ENCODE measurements at regions of chr1 and their contacts with region 1.

Region 1: GRCh38 chr1:32933742-32934322 is 30.8 kb downstream of the RNF19B start:
- DNase-seq: peak; percentile 99
- ATAC-seq: peak; percentile 87
- H3K4me3 ChIP-seq: peak overlapping the region; percentile 42 to 48 (median 44); a peak in 5 of 6 replicates
- H3K27ac ChIP-seq: peak overlapping the region; percentile 90
- H3K4me1 ChIP-seq: peaks cover 45% of the 10 kb centered on the region
- H3K27me3 ChIP-seq: peaks cover 0 to 10% of the 10 kb centered on the region in 2 experiments; a peak in 3 of 5 replicates
- CTCF ChIP-seq: peak; percentile 21
- EP300 ChIP-seq: peak in 1 of 2 experiments; percentile 87; a peak in 2 of 4 replicates
- POLR2A ChIP-seq: no peak
- RAD21 ChIP-seq: no peak

Region 2: GRCh38 chr1:32964461-32965250 is 30.8 kb after region 1 on chr1 and contains the start of gene RNF19B:
- CTCF ChIA-PET with region 1: no interaction called
- POLR2A ChIA-PET with region 1: interaction called, 26 read pairs
- in situ Hi-C with region 1: no loop called
- intact Hi-C with region 1: loop called (anchors 2 kb)
- DNase-seq: peak; percentile 87
- ATAC-seq: peak; percentile 95
- H3K4me3 ChIP-seq: peak within 1 kb of the TSS; percentile 87 to 97 (median 90)
- H3K27ac ChIP-seq: peak within 1 kb of the TSS; percentile 76
- H3K4me1 ChIP-seq: peaks cover 23% of the 10 kb centered on the region
- H3K27me3 ChIP-seq: peaks cover 0 to 2% of the 10 kb centered on the region in 2 experiments; a peak in 1 of 5 replicates
- CTCF ChIP-seq: peak; percentile 36; the same call in 1 of the 2 replicates
- EP300 ChIP-seq: no peak
- POLR2A ChIP-seq: peak; percentile 95 to 98
- RAD21 ChIP-seq: peak; percentile 64; the same call in 1 of the 2 replicates
- total RNA-seq, gene RNF19B: 15.3 and 16.3 TPM in 2 replicates

Region 3: GRCh38 chr1:33007190-33008050 is 73.6 kb after region 1 on chr1:
- CTCF ChIA-PET with region 1: no interaction called
- POLR2A ChIA-PET with region 1: no interaction called
- in situ Hi-C with region 1: loop called (anchors 5 kb)
- intact Hi-C with region 1: loop called (anchors 2 kb)
- DNase-seq: peak; percentile 61
- ATAC-seq: peak; percentile 83
- H3K4me3 ChIP-seq: no peak overlapping the region
- H3K27ac ChIP-seq: no peak overlapping the region
- H3K4me1 ChIP-seq: peaks cover 15% of the 10 kb centered on the region; the same call in 1 of the 2 replicates
- H3K27me3 ChIP-seq: no peaks in the 10 kb centered on the region
- CTCF ChIP-seq: peak; percentile 41; the same call in 1 of the 2 replicates
- EP300 ChIP-seq: no peak
- POLR2A ChIP-seq: no peak
- RAD21 ChIP-seq: no peak

Region 4: GRCh38 chr1:33036526-33037503 is 103.0 kb after region 1 on chr1 and contains the start of gene AK2:
- CTCF ChIA-PET with region 1: no interaction called
- POLR2A ChIA-PET with region 1: no interaction called
- in situ Hi-C with region 1: no loop called
- intact Hi-C with region 1: loop called (anchors 5 kb)
- DNase-seq: peak; percentile 97
- ATAC-seq: peak; percentile 100
- H3K4me3 ChIP-seq: peak within 1 kb of the TSS; percentile 77 to 86 (median 85)
- H3K27ac ChIP-seq: peak within 1 kb of the TSS; percentile 76
- H3K4me1 ChIP-seq: peaks cover 75% of the 10 kb centered on the region
- H3K27me3 ChIP-seq: no peaks in the 10 kb centered on the region
- CTCF ChIP-seq: no peak
- EP300 ChIP-seq: no peak
- POLR2A ChIP-seq: peak; percentile 63 to 80; a peak in 3 of 4 replicates
- RAD21 ChIP-seq: no peak
- total RNA-seq, gene AK2: 188 and 241 TPM in 2 replicates

Region 5: DNA sequence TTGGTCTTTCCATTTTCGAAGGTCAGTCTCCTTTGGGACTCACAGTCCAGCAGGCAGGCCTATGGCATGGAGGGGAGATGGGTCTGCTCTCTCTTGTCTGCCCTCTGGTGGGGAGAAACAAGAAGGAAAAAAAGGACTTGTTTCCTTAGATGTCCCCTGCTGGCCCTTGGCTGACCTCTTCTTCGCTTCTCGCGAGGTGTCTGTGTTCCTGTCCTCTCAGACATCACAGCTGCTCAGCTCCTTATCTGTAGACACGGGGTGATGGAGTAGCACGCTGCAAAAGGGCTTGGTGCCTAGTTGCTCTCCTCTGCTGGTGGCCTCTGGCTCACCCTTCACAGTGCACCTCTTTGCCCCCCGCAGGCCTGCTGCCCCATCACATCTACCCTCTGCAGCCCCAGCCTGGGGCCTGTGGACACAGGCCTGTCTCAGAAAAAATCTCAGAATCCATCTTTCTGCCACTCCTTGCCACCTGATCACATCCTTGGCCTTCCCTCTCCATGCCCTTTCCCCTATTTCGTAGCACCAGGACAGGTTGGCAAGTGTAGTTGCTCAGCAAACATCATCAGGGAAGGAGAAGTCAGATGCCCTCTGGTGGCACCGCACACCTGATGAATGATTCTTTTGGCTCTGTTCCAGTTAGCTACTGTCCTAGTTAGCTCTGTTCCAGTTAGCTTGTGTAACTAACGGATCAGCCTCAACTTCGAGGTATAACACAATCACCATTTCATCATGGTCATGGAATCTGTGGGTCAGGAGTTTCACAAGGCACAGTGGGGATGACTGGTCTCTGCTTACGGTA is 121.6 kb after region 1 on chr1:
- CTCF ChIA-PET with region 1: interaction called, 44 read pairs
- POLR2A ChIA-PET with region 1: interaction called, 7 read pairs
- in situ Hi-C with region 1: loop called (anchors 5 kb)
- intact Hi-C with region 1: loop called (anchors 1 kb)
- DNase-seq: peak; percentile 88
- ATAC-seq: peak; percentile 87
- H3K4me3 ChIP-seq: peak overlapping the region in 1 of 3 experiments; percentile 51; a peak in 1 of 6 replicates
- H3K27ac ChIP-seq: no peak overlapping the region
- H3K4me1 ChIP-seq: peaks cover 43% of the 10 kb centered on the region
- H3K27me3 ChIP-seq: no peaks in the 10 kb centered on the region
- CTCF ChIP-seq: peak; percentile 83
- EP300 ChIP-seq: no peak
- POLR2A ChIP-seq: no peak
- RAD21 ChIP-seq: peak; percentile 78